Heart right ventricle (tissue), 16 donors: ENCODE measurements at regions of chr6 and their contacts with region 1.

Region 1: GRCh38 chr6:145187480-145188168 is 547.7 kb downstream of the EPM2A start:
- DNase-seq: no peak
- ATAC-seq: no peak
- H3K4me3 ChIP-seq: no peak overlapping the region
- H3K27ac ChIP-seq: no peak overlapping the region
- H3K4me1 ChIP-seq: no peaks in the 10 kb centered on the region
- H3K27me3 ChIP-seq: no peaks in the 10 kb centered on the region
- CTCF ChIP-seq: no peak

Region 2: DNA sequence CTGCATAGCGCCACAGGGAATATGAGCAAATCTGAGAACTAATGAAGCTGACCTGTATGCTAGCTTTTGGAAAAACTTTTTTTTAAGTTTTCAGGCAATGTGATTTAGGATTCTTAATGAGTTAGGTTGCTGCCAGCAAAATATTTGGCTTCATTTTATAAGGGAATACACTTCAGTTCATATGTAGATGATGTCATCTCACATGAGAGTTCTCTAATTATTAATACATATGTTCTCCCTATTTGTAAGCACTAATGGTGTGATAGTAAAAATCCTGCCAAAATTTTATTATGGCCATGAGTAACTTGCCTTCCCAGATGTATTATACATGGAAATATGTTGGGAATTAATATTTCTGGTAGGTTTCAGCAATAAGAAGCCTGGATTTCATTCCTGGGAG is 26.1 kb before region 1 on chr6:
- intact Hi-C with region 1: loop called in 1 of 10 experiments (anchors 2 kb)
- DNase-seq: no peak
- ATAC-seq: no peak
- H3K4me3 ChIP-seq: no peak overlapping the region
- H3K27ac ChIP-seq: no peak overlapping the region
- H3K4me1 ChIP-seq: no peaks in the 10 kb centered on the region
- H3K27me3 ChIP-seq: no peaks in the 10 kb centered on the region
- CTCF ChIP-seq: no peak